Activated B cell treated with CpG ODN at 0.5 μM for 24 hours (primary cell): ENCODE measurements at regions of chr22 and their contacts with region 1.

Region 1: DNA sequence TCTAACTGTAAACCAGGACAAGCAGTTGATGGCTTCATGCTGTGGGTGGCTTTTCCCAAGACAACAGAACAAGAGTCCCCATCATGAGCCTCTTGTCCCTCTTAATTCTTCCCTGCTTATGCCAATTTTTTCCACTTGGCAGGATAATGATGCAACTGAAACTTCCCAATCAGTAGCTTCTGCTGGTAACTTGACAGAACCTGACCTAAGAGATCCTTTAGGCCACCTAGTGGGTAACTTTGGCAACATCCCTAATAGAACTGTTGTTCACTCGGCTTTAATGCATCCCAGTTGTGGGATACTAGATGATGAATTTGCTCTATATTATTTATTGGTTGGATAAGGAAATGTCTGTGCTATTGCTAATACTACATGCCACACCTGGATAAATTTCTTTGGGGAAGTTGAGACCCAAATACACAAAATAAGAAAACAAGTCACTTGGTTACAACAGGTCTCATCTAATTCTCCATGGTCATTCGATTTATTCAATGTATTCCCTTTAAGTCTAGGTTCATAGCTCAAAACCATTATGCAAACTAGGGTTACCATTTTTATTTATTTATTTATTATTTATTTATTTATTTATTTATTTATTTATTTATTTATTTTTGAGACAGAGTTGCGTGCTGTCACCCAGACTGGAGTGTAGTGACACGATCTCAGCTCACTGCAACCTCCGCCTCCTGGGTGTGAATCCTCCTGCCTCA is 41.4 kb upstream of the NFAM1 start:
- DNase-seq: no peak
- ATAC-seq: peak; percentile 64
- H3K4me3 Mint-ChIP-seq: no peak overlapping the region
- H3K27ac Mint-ChIP-seq: no peak overlapping the region
- H3K4me1 Mint-ChIP-seq: peaks cover 3% of the 10 kb centered on the region
- H3K27me3 Mint-ChIP-seq: peaks cover 3% of the 10 kb centered on the region
- CTCF ChIP-seq: peak; percentile 76

Region 2: GRCh38 chr22:41966607-41967240 is 506.9 kb before region 1 on chr22:
- CTCF ChIA-PET with region 1: no interaction called
- POLR2A ChIA-PET with region 1: no interaction called
- intact Hi-C with region 1: loop called (anchors 1 kb)
- DNase-seq: no peak
- ATAC-seq: peak; percentile 89
- H3K4me3 Mint-ChIP-seq: no peak overlapping the region
- H3K27ac Mint-ChIP-seq: no peak overlapping the region
- H3K4me1 Mint-ChIP-seq: no peaks in the 10 kb centered on the region
- H3K27me3 Mint-ChIP-seq: peaks cover 10% of the 10 kb centered on the region
- CTCF ChIP-seq: no peak

Region 3: GRCh38 chr22:42169055-42169469 is 304.6 kb before region 1 on chr22:
- CTCF ChIA-PET with region 1: no interaction called
- POLR2A ChIA-PET with region 1: no interaction called
- intact Hi-C with region 1: loop called (anchors 1 kb)
- DNase-seq: peak; percentile 48
- ATAC-seq: peak; percentile 79
- H3K4me3 Mint-ChIP-seq: no peak overlapping the region
- H3K27ac Mint-ChIP-seq: no peak overlapping the region
- H3K4me1 Mint-ChIP-seq: peaks cover 34% of the 10 kb centered on the region
- H3K27me3 Mint-ChIP-seq: no peaks in the 10 kb centered on the region
- CTCF ChIP-seq: no peak

Region 4: DNA sequence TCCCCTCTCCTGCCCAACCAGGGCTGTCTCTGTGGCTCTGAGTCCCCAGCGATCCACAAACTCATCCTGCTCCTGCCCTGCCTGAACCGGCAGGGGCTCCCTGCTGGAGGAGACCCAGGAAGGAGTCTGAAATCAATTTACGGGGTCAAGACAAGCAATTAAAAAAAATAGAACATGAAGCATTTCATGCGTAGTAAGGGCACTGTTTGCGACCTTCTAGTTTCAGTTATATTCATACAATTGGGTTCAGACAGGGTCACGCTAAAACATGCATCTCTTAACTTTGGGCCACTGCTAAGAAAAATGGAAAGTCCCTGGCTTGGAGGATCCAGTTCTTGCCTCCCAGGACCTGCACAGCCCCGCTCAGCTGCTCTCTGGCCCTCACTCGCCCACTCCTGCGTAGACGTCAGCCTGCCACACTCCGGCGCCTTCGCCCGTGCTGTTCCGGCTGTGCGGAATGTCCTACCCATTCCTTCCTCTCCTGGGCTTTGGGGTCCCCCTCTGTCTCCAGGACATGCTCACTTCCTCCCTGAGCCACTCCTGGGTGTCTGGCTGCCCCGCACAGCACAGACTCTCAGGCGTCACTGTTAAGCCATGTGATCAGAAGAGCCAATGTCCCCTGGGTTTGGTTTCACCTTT is 54.3 kb before region 1 on chr22:
- CTCF ChIA-PET with region 1: no interaction called
- POLR2A ChIA-PET with region 1: no interaction called
- intact Hi-C with region 1: no loop called
- DNase-seq: no peak
- ATAC-seq: peak; percentile 78
- H3K4me3 Mint-ChIP-seq: peak overlapping the region; percentile 70
- H3K27ac Mint-ChIP-seq: no peak overlapping the region
- H3K4me1 Mint-ChIP-seq: peaks cover 17% of the 10 kb centered on the region
- H3K27me3 Mint-ChIP-seq: peaks cover 21% of the 10 kb centered on the region
- CTCF ChIP-seq: no peak